ENCODE measurements at regions of chr3 and their contacts with region 1.

Region 1: DNA sequence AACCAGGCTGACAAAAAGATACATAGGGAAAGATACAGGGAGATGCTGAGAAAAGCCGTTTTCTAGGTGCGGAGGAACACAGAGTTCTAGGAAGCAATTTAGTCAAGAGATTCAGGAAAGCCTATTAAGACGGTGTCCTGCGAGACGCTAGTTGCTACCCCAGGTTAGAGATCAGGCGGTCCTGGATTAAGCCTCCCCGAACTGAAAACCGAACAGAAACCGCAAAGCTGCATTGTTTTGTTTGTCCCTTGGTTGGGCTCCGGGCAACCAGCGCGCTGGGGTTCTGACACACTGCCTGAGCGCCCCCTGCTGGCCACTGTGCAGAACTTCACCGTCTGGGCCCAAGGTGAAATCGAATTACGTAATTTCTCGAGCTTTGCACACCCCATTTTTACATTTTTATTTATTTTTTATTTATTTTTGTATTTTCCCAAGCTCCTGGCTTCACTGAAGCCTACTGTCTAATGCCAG is 37.3 kb upstream of the NDUFB4 start:
- DNase-seq: peak; percentile 90 to 92
- H3K4me3 ChIP-seq: peak overlapping the region; percentile 22
- H3K4me1 ChIP-seq: peaks cover 9% of the 10 kb centered on the region
- H3K27me3 ChIP-seq: no peaks in the 10 kb centered on the region

Region 2: GRCh38 chr3:120239644-120240043 is 319.2 kb before region 1 on chr3:
- in situ Hi-C with region 1: loop called (anchors 5 kb)
- DNase-seq: no peak
- H3K4me3 ChIP-seq: no peak overlapping the region
- H3K4me1 ChIP-seq: no peaks in the 10 kb centered on the region
- H3K27me3 ChIP-seq: peaks cover 11% of the 10 kb centered on the region; the same call in 1 of the 2 replicates

Region 3: DNA sequence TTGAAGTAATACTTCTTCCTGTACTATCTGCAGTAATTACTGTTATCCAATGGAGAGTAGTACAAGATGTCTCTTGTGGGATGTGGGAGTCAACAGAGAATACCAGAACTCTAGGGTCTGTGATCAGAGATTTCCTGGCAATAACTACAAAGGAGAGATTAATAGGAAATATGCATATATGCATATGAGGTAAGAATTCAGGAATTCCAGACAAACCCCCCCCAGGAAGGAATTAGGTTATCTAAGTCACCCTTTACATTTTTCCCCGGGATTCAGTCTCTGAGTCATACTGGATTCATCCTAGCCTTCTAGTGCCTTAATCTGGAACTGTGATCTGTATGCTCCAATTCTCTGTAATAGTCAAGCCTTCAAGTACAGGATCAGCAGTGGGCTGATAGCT is 233.1 kb after region 1 on chr3:
- in situ Hi-C with region 1: loop called (anchors 5 kb)
- DNase-seq: no peak
- H3K4me3 ChIP-seq: no peak overlapping the region
- H3K4me1 ChIP-seq: peaks cover 5% of the 10 kb centered on the region; the same call in 1 of the 2 replicates
- H3K27me3 ChIP-seq: no peaks in the 10 kb centered on the region

Region 4: GRCh38 chr3:121063628-121064027 is 504.8 kb after region 1 on chr3:
- in situ Hi-C with region 1: no loop called
- DNase-seq: no peak
- H3K4me3 ChIP-seq: no peak overlapping the region
- H3K4me1 ChIP-seq: no peaks in the 10 kb centered on the region
- H3K27me3 ChIP-seq: no peaks in the 10 kb centered on the region

Region 5: DNA sequence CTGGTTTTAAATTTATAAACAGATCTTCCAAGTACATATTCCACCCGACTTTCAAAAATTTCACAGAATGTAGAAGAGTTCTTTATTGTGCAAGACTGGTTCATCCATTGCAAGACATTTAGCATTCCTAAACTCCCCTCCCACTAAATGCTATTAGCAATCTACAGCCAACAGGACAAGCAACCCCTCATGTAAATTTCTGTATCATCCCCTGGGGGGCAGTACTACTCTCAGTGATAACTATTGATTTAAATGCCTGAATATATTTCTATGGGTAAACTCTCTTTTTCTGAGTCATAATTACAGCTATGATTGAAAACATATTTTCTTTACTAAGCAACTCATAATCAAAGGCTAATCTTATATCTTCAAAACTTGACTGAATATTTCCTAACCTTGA is 1324.7 kb after region 1 on chr3:
- in situ Hi-C with region 1: no loop called
- DNase-seq: peak; percentile 23 to 41
- H3K4me3 ChIP-seq: no peak overlapping the region
- H3K4me1 ChIP-seq: peaks cover 17% of the 10 kb centered on the region
- H3K27me3 ChIP-seq: no peaks in the 10 kb centered on the region

Measured in HAP-1 (cell line).